ENCODE measurements at regions of chr1 and their contacts with region 1.

Region 1: GRCh38 chr1:228902781-228903433 is 167.6 kb downstream of the RHOU start:
- DNase-seq: peak; percentile 100
- H3K4me3 Mint-ChIP-seq: peak overlapping the region; percentile 57
- H3K27ac Mint-ChIP-seq: peak overlapping the region; percentile 89
- H3K4me1 Mint-ChIP-seq: peaks cover 30% of the 10 kb centered on the region
- H3K27me3 Mint-ChIP-seq: peaks cover 75% of the 10 kb centered on the region
- CTCF ChIP-seq: no peak

Region 2: DNA sequence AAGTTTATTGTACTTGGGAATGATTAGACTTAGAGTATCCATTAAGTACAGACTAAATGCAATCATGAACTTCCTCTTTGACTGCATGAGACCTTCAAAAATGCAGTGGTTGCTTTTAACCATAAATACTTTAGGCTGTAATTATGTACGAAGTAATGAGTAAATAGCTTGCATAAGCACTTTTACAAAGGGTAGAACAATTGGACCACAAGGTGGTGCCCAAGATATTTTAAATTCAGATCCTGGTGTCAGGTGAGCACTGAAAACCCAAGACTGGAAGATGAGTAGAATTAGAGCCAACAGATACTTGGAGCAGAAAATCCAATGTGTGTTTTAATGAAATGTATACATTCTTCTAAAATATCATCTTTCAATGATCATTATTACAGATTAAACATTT is 211.0 kb before region 1 on chr1:
- CTCF ChIA-PET with region 1: interaction called, 5 read pairs
- POLR2A ChIA-PET with region 1: no interaction called
- intact Hi-C with region 1: loop called (anchors 5 kb)
- DNase-seq: peak; percentile 84
- H3K4me3 Mint-ChIP-seq: no peak overlapping the region
- H3K27ac Mint-ChIP-seq: no peak overlapping the region
- H3K4me1 Mint-ChIP-seq: peaks cover 18% of the 10 kb centered on the region
- H3K27me3 Mint-ChIP-seq: no peaks in the 10 kb centered on the region
- CTCF ChIP-seq: peak; percentile 85

Region 3: GRCh38 chr1:228794173-228794572 is 108.7 kb before region 1 on chr1:
- CTCF ChIA-PET with region 1: no interaction called
- POLR2A ChIA-PET with region 1: no interaction called
- intact Hi-C with region 1: no loop called
- DNase-seq: peak; percentile 24
- H3K4me3 Mint-ChIP-seq: no peak overlapping the region
- H3K27ac Mint-ChIP-seq: no peak overlapping the region
- H3K4me1 Mint-ChIP-seq: no peaks in the 10 kb centered on the region
- H3K27me3 Mint-ChIP-seq: no peaks in the 10 kb centered on the region
- CTCF ChIP-seq: no peak

Region 4: GRCh38 chr1:228860911-228861831 is 41.7 kb before region 1 on chr1:
- CTCF ChIA-PET with region 1: no interaction called
- POLR2A ChIA-PET with region 1: interaction called, 12 read pairs
- intact Hi-C with region 1: no loop called
- DNase-seq: peak; percentile 88
- H3K4me3 Mint-ChIP-seq: peak overlapping the region; percentile 1
- H3K27ac Mint-ChIP-seq: peak overlapping the region; percentile 2
- H3K4me1 Mint-ChIP-seq: peaks cover 32% of the 10 kb centered on the region
- H3K27me3 Mint-ChIP-seq: peaks cover 20% of the 10 kb centered on the region
- CTCF ChIP-seq: no peak

Region 5: GRCh38 chr1:228923973-228924686 is 21.2 kb after region 1 on chr1:
- CTCF ChIA-PET with region 1: no interaction called
- POLR2A ChIA-PET with region 1: no interaction called
- intact Hi-C with region 1: no loop called
- DNase-seq: no peak
- H3K4me3 Mint-ChIP-seq: no peak overlapping the region
- H3K27ac Mint-ChIP-seq: no peak overlapping the region
- H3K4me1 Mint-ChIP-seq: no peaks in the 10 kb centered on the region
- H3K27me3 Mint-ChIP-seq: peaks cover 11% of the 10 kb centered on the region
- CTCF ChIP-seq: no peak

Region 6: GRCh38 chr1:229117664-229118300 is 214.9 kb after region 1 on chr1:
- CTCF ChIA-PET with region 1: interaction called, 3 read pairs
- POLR2A ChIA-PET with region 1: no interaction called
- intact Hi-C with region 1: loop called (anchors 2 kb)
- DNase-seq: peak; percentile 98
- H3K4me3 Mint-ChIP-seq: peak overlapping the region; percentile 15
- H3K27ac Mint-ChIP-seq: peak overlapping the region; percentile 55
- H3K4me1 Mint-ChIP-seq: peaks cover 26% of the 10 kb centered on the region
- H3K27me3 Mint-ChIP-seq: no peaks in the 10 kb centered on the region
- CTCF ChIP-seq: no peak

Measured in MCF 10A (cell line).